Activated B cell treated with CpG ODN at 0.5 μM for 24 hours (primary cell): ENCODE measurements at regions of chr7 and their contacts with region 1.

Region 1: GRCh38 chr7:1532483-1533424 is 2.3 kb downstream of the MAFK start:
- DNase-seq: no peak
- ATAC-seq: peak; percentile 26
- H3K4me3 Mint-ChIP-seq: peak overlapping the region; percentile 87
- H3K27ac Mint-ChIP-seq: peak overlapping the region; percentile 87
- H3K4me1 Mint-ChIP-seq: peaks cover 34% of the 10 kb centered on the region
- H3K27me3 Mint-ChIP-seq: no peaks in the 10 kb centered on the region
- CTCF ChIP-seq: no peak

Region 2: DNA sequence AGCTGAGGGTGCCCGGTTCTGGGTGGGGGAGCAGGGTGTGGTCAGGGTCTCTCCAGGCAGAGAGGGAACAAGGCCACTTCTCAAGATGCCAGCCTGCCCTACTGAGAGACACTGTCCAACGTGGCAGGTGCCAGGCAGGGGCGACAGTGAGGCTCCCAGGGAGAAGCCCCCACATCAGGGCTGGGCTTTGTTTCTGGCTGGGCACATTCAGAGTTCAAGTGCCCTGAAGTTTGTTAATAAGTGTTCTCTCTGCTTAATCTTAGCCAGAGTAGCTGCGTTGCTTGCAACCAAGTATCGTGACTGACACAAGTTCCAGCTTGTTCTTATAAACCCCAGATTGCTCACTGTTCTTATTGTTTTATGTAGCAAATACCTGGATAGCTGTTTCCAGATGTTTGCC is 1221.0 kb before region 1 on chr7:
- CTCF ChIA-PET with region 1: no interaction called
- POLR2A ChIA-PET with region 1: no interaction called
- intact Hi-C with region 1: no loop called
- DNase-seq: no peak
- ATAC-seq: no peak
- H3K4me3 Mint-ChIP-seq: no peak overlapping the region
- H3K27ac Mint-ChIP-seq: no peak overlapping the region
- H3K4me1 Mint-ChIP-seq: no peaks in the 10 kb centered on the region
- H3K27me3 Mint-ChIP-seq: peaks cover 18% of the 10 kb centered on the region
- CTCF ChIP-seq: no peak

Region 3: GRCh38 chr7:1234881-1235500 is 297.8 kb before region 1 on chr7:
- CTCF ChIA-PET with region 1: no interaction called
- POLR2A ChIA-PET with region 1: no interaction called
- intact Hi-C with region 1: loop called (anchors 10 kb)
- DNase-seq: no peak
- ATAC-seq: no peak
- H3K4me3 Mint-ChIP-seq: no peak overlapping the region
- H3K27ac Mint-ChIP-seq: peak overlapping the region; percentile 50
- H3K4me1 Mint-ChIP-seq: peaks cover 12% of the 10 kb centered on the region
- H3K27me3 Mint-ChIP-seq: peaks cover 41% of the 10 kb centered on the region
- CTCF ChIP-seq: no peak

Region 4: GRCh38 chr7:1459522-1459892 is 73.2 kb before region 1 on chr7:
- CTCF ChIA-PET with region 1: no interaction called
- POLR2A ChIA-PET with region 1: no interaction called
- intact Hi-C with region 1: loop called (anchors 2 kb)
- DNase-seq: peak; percentile 97
- ATAC-seq: peak; percentile 96
- H3K4me3 Mint-ChIP-seq: peak overlapping the region; percentile 69
- H3K27ac Mint-ChIP-seq: no peak overlapping the region
- H3K4me1 Mint-ChIP-seq: peaks cover 11% of the 10 kb centered on the region
- H3K27me3 Mint-ChIP-seq: no peaks in the 10 kb centered on the region
- CTCF ChIP-seq: no peak

Region 5: GRCh38 chr7:1512781-1513656 is 19.7 kb before region 1 on chr7:
- CTCF ChIA-PET with region 1: no interaction called
- POLR2A ChIA-PET with region 1: interaction called, 11 read pairs
- intact Hi-C with region 1: loop called (anchors 2 kb)
- DNase-seq: peak; percentile 42
- ATAC-seq: peak; percentile 76
- H3K4me3 Mint-ChIP-seq: peak overlapping the region; percentile 60
- H3K27ac Mint-ChIP-seq: peak overlapping the region; percentile 61
- H3K4me1 Mint-ChIP-seq: peaks cover 45% of the 10 kb centered on the region
- H3K27me3 Mint-ChIP-seq: no peaks in the 10 kb centered on the region
- CTCF ChIP-seq: no peak

Region 6: DNA sequence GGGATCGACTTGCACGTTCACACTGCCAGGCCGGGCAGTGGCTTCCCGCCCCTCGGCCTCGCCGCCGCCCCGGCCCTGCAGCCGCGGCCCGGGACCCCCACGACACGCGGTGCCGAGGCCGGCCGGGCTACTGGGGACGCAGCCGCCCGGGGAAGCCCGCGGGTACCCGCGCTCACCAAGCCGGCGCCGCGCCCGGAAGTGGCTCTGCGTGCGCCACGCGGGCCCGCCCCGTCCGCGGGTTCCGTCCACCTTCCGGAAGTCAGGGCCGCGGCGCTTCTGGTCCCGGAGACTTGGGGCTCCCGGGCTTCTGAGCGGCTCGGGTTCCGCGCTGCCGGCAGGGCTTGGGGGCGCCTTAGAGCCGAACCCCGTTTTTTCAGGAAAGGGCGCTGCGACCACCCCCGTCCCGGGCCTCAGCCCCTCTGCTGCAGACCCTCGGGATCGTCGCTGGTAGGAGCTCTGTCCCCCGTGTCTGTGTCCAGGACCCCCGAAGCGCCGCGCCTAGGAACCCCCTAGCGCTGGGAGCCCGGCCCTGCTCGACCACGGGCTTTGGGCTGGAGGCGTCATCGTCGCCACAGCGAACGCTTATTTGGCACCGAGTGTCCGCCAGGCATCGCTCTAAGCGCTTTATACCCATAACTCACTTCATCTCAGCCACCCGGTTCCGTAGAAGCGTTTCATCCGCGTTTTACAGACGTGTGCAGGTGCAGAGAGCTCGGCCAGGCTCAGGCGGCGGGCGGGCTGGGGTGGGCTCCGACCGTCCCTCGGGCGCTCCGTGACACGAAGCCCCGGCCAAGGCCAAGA is 37.3 kb after region 1 on chr7 and contains the start of gene PSMG3:
- CTCF ChIA-PET with region 1: no interaction called
- POLR2A ChIA-PET with region 1: interaction called, 5 read pairs
- intact Hi-C with region 1: loop called (anchors 1 kb)
- DNase-seq: peak; percentile 91
- ATAC-seq: peak; percentile 90
- H3K4me3 Mint-ChIP-seq: peak within 1 kb of the TSS; percentile 86
- H3K27ac Mint-ChIP-seq: peak within 1 kb of the TSS; percentile 88
- H3K4me1 Mint-ChIP-seq: peaks cover 26% of the 10 kb centered on the region
- H3K27me3 Mint-ChIP-seq: no peaks in the 10 kb centered on the region
- CTCF ChIP-seq: no peak
- total RNA-seq, gene PSMG3: 29.5 and 30.5 TPM in 2 replicates